PC-9 (cell line): ENCODE measurements at regions of chr5 and their contacts with region 1.

Region 1: GRCh38 chr5:143594913-143595841 is 191.7 kb upstream of the NR3C1 start:
- DNase-seq: peak; percentile 46 to 83
- H3K4me3 ChIP-seq: 0 out of 2 replicates have a peak overlapping the region, but pooled peaks have one; percentile 16
- H3K27ac ChIP-seq: peak overlapping the region; percentile 97
- H3K4me1 ChIP-seq: peaks cover 29% of the 10 kb centered on the region
- H3K27me3 ChIP-seq: no peaks in the 10 kb centered on the region
- CTCF ChIP-seq: no peak

Region 2: GRCh38 chr5:143506881-143507551 is 88.2 kb before region 1 on chr5:
- CTCF ChIA-PET with region 1: interaction called, 8 read pairs
- POLR2A ChIA-PET with region 1: no interaction called
- intact Hi-C with region 1: loop called (anchors 1 kb)
- DNase-seq: peak; percentile 45 to 93
- H3K4me3 ChIP-seq: no peak overlapping the region
- H3K27ac ChIP-seq: peak overlapping the region; percentile 79
- H3K4me1 ChIP-seq: peaks cover 36% of the 10 kb centered on the region
- H3K27me3 ChIP-seq: no peaks in the 10 kb centered on the region
- CTCF ChIP-seq: no peak

Region 3: DNA sequence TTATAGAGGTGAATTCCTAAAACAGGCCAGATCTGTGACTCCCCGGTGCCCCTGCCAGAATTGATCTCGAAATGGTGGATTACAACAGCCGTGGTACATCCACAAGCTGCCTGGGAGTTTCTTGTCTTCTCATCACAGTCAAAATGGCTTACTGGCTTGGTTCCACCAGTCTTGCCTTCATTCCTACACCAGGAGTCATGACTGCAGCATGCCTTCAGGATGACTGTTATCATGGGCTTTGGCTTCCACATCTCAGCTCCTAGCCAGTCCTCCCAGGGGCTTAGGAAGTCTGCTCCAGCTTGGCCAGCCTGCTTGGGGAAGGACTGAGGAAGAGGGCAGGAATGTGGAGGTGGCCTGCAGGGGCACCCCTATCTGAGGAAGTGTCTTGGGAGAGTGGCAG is 58.8 kb before region 1 on chr5:
- CTCF ChIA-PET with region 1: no interaction called
- POLR2A ChIA-PET with region 1: no interaction called
- intact Hi-C with region 1: loop called (anchors 1 kb)
- DNase-seq: peak; percentile 78 to 79
- H3K4me3 ChIP-seq: no peak overlapping the region
- H3K27ac ChIP-seq: peak overlapping the region; percentile 17
- H3K4me1 ChIP-seq: peaks cover 15% of the 10 kb centered on the region
- H3K27me3 ChIP-seq: no peaks in the 10 kb centered on the region
- CTCF ChIP-seq: no peak

Region 4: GRCh38 chr5:143629871-143630659 is 34.9 kb after region 1 on chr5:
- CTCF ChIA-PET with region 1: no interaction called
- POLR2A ChIA-PET with region 1: no interaction called
- intact Hi-C with region 1: loop called (anchors 2 kb)
- DNase-seq: peak; percentile 12 to 90
- H3K4me3 ChIP-seq: no peak overlapping the region
- H3K27ac ChIP-seq: peak overlapping the region; percentile 75
- H3K4me1 ChIP-seq: peaks cover 25% of the 10 kb centered on the region
- H3K27me3 ChIP-seq: no peaks in the 10 kb centered on the region
- CTCF ChIP-seq: no peak

Region 5: DNA sequence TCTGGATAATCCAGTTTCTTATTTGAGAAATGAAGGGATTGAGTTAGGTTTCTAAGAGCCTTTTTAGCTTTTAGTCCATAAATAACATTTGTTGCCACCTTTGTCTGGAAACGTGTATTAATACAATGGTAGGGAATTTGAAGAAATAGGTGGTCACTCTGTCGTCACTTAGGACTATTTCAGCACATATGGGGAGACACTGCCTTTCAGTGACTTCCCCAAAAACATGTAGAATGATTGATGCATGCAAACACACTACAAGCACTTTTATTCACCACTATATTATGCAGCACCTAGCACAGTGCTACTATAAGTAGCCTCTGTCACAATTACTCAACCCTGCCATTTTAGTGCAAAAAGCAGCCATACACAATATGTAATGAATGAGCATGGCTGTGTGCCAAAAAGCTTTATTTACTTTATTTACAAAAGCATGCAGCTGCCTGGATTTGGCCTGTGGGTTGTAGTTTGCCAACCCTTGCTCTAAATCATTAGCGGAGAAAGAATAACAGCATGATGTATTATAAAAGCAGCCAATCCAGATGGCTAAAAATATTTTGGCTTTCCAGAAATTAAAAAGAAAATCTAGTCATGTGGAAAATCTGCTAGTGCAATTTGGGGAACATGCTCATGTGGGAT is 62.6 kb after region 1 on chr5:
- CTCF ChIA-PET with region 1: no interaction called
- POLR2A ChIA-PET with region 1: no interaction called
- intact Hi-C with region 1: loop called (anchors 1 kb)
- DNase-seq: peak; percentile 34 to 89
- H3K4me3 ChIP-seq: no peak overlapping the region
- H3K27ac ChIP-seq: no peak overlapping the region
- H3K4me1 ChIP-seq: peaks cover 63% of the 10 kb centered on the region
- H3K27me3 ChIP-seq: no peaks in the 10 kb centered on the region
- CTCF ChIP-seq: no peak

Region 6: GRCh38 chr5:143968011-143968878 is 373.1 kb after region 1 on chr5:
- CTCF ChIA-PET with region 1: no interaction called
- POLR2A ChIA-PET with region 1: no interaction called
- intact Hi-C with region 1: loop called (anchors 2 kb)
- DNase-seq: peak; percentile 21 to 79
- H3K4me3 ChIP-seq: no peak overlapping the region
- H3K27ac ChIP-seq: peak overlapping the region; percentile 47; the same call in 1 of the 2 replicates
- H3K4me1 ChIP-seq: peaks cover 46% of the 10 kb centered on the region
- H3K27me3 ChIP-seq: no peaks in the 10 kb centered on the region
- CTCF ChIP-seq: peak; percentile 68